A673 (cell line): ENCODE measurements at regions of chr22 and their contacts with region 1.

Region 1: GRCh38 chr22:40560551-40560950 is 76.0 kb downstream of the MRTFA start:
- DNase-seq: peak; percentile 12
- H3K4me3 ChIP-seq: no peak overlapping the region
- H3K27ac ChIP-seq: no peak overlapping the region
- H3K4me1 ChIP-seq: peaks cover 16% of the 10 kb centered on the region
- H3K27me3 ChIP-seq: no peaks in the 10 kb centered on the region
- CTCF ChIP-seq: no peak

Region 2: DNA sequence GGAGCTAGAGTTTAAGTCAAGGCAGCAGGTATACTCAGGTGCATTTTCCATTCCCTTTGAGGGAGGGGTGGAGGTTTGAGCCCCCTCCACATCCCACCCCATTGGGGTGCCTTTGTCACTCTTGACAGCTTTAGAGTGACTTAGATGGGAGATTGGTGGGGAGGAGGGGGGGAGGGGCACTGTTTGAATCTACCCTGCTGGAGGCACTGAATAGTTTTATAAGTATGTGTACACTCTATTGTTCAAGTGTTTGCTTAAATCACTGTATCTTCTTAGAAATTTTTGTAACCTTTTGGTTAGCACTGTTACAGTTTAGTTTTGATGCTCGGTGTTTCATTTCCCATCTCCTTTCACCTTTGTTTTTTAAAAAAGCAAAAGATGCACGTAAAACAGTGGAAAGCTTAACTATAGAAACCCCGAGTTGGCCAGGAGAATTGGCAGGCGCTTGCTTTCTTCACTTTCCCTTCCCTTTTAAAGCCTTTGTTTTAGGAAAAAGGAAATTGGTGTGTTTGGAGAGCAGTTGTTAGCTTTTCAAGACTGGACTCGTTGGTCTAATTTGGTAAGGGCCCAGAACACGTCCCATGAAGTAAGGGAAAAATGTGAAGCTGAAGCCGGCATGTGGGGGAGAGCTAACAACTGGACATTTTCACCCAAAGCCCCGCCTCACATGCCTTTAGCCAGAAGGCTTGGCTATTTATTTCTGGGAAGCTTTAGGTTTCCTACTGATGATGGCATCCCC is 340.1 kb before region 1 on chr22:
- CTCF ChIA-PET with region 1: no interaction called
- POLR2A ChIA-PET with region 1: interaction called, 22 read pairs
- intact Hi-C with region 1: no loop called
- DNase-seq: no peak
- H3K4me3 ChIP-seq: no peak overlapping the region
- H3K27ac ChIP-seq: no peak overlapping the region
- H3K4me1 ChIP-seq: peaks cover 11% of the 10 kb centered on the region
- H3K27me3 ChIP-seq: no peaks in the 10 kb centered on the region
- CTCF ChIP-seq: no peak